ENCODE measurements at regions of chr10 and their contacts with region 1.

Region 1: GRCh38 chr10:6114805-6115341 is 26.0 kb downstream of the RBM17 start:
- DNase-seq: no peak
- H3K4me3 ChIP-seq: no peak overlapping the region
- H3K27ac ChIP-seq: no peak overlapping the region
- H3K4me1 ChIP-seq: peaks cover 6% of the 10 kb centered on the region
- H3K27me3 ChIP-seq: no peaks in the 10 kb centered on the region
- CTCF ChIP-seq: no peak
- POLR2A ChIP-seq: no peak

Region 2: GRCh38 chr10:6401562-6402348 is 286.9 kb after region 1 on chr10:
- intact Hi-C with region 1: loop called (anchors 5 kb)
- DNase-seq: peak; percentile 87
- H3K4me3 ChIP-seq: no peak overlapping the region
- H3K27ac ChIP-seq: no peak overlapping the region
- H3K4me1 ChIP-seq: peaks cover 3% of the 10 kb centered on the region
- H3K27me3 ChIP-seq: no peaks in the 10 kb centered on the region
- CTCF ChIP-seq: peak; percentile 68 to 77 (median 75)
- POLR2A ChIP-seq: no peak

Measured in testis (tissue), 5 donors.